SK-N-SH (cell line): ENCODE measurements at regions of chr7 and their contacts with region 1.

Region 1: GRCh38 chr7:140384894-140385545 is 13.3 kb downstream of the SLC37A3 start:
- DNase-seq: no peak
- H3K4me3 ChIP-seq: no peak overlapping the region
- H3K27ac ChIP-seq: no peak overlapping the region
- H3K4me1 ChIP-seq: no peaks in the 10 kb centered on the region
- H3K27me3 ChIP-seq: no peaks in the 10 kb centered on the region
- CTCF ChIP-seq: no peak
- EP300 ChIP-seq: no peak
- RAD21 ChIP-seq: no peak

Region 2: DNA sequence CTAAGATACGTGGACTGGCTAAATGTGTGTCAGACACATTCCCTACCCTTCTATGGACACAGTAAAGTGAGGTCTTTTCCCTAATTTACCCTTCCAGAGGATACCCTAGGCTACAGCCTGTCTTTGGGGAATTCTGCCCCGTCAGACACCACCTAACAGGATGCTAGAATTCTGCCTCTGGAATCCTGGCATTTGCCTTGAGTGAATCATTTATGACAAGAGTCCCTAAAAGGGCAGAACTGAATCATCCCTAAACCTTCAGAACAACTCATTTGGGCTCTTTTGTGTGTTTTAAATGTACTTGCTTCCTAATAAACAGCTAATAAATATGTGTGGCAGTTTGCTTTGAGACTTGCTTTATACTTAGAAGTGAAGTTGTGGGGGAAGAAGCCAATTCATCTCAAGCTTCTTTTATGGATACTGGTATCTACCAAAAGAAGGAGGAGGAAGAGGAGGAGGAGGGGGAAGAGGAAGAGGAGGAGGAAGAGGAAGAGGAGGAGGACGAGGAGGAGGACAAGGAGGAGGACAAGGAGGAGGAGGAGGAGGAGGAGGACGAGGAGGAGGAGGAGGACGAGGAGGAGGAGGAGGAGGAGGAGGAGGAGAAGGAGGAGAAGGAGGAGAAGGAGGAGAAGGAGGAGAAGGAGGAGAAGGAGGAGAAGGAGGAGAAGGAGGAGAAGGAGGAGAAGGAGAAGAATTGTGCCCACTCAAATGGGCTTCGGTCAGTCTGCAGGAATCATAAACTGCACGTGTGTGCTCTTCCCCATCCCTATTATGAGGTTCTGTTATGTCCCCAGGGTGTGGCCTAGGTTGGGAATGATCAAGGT is 349.4 kb before region 1 on chr7:
- CTCF ChIA-PET with region 1: no interaction called
- POLR2A ChIA-PET with region 1: no interaction called
- DNase-seq: no peak
- H3K4me3 ChIP-seq: 0 out of 4 replicates have a peak overlapping the region, but pooled peaks of 1 of the 2 experiments have one; percentile 15
- H3K27ac ChIP-seq: peak overlapping the region; percentile 29 to 58; a peak in 3 of 4 replicates
- H3K4me1 ChIP-seq: peaks cover 32 to 37% of the 10 kb centered on the region in 2 experiments
- H3K27me3 ChIP-seq: no peaks in the 10 kb centered on the region
- CTCF ChIP-seq: no peak
- EP300 ChIP-seq: peak in 1 of 2 experiments; percentile 54; a peak in 1 of 4 replicates
- RAD21 ChIP-seq: no peak

Region 3: DNA sequence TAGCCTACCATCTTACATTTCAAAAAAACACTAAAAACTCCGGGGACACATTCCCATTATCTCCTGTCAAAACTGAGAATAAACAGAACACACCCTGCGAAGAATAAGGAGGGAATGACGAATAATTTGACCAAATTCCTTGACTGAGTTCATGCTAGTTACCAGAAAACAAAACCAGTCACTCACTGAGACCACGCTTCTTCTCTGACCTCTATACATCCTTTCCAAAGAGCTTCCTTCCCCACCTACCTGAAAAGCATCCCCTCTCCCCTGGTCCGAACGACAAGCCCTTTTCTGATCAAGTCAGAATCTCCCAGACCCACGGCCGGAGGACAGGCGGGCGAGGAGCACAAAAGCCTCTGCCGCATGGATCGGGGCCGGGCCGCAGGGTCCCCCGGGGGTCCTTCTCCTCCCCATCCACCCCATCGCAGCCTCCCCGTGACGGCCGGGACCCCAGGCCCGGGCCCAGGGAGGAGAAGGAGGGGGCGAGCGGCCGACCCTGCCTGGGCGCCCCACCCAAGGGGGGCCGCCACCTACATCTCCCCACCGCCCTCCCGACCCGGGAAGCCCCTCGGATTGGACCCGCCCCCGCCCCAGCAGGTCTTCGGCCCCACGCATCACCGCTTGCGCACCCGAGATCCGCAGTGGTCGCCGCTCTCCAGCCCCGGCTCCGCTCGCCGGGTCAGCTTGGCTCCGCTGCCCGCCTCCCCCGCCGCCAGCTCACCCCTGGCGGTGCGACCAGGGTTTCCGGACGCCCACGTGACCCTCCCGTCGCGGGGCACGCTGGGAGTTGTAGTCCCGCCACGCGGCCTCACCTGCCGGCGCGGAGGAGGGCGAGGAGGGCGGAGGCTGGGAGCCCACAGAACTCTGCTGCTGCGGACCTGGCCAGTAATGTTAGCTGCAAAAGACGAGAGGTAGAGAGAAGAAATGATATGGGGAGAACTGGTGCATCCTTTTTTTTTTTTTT is 13.0 kb after region 1 on chr7 and contains the start of gene SLC37A3:
- CTCF ChIA-PET with region 1: interaction called, 10 read pairs
- POLR2A ChIA-PET with region 1: no interaction called
- DNase-seq: peak; percentile 99
- H3K4me3 ChIP-seq: peak within 1 kb of the TSS; percentile 64 to 92
- H3K27ac ChIP-seq: peak within 1 kb of the TSS; percentile 64 to 74; a peak in 3 of 4 replicates
- H3K4me1 ChIP-seq: peaks cover 0 to 3% of the 10 kb centered on the region in 2 experiments; a peak in 2 of 4 replicates
- H3K27me3 ChIP-seq: peaks cover 10% of the 10 kb centered on the region
- CTCF ChIP-seq: 0 out of 2 replicates have a peak, but pooled peaks have one; percentile 11
- EP300 ChIP-seq: peak; percentile 35 to 37; a peak in 2 of 4 replicates
- RAD21 ChIP-seq: no peak
- polyA plus RNA-seq, gene SLC37A3: 53.3 and 73.2 TPM in 2 replicates